Sigmoid colon (tissue), 7 donors: ENCODE measurements at regions of chr11 and their contacts with region 1.

Region 1: DNA sequence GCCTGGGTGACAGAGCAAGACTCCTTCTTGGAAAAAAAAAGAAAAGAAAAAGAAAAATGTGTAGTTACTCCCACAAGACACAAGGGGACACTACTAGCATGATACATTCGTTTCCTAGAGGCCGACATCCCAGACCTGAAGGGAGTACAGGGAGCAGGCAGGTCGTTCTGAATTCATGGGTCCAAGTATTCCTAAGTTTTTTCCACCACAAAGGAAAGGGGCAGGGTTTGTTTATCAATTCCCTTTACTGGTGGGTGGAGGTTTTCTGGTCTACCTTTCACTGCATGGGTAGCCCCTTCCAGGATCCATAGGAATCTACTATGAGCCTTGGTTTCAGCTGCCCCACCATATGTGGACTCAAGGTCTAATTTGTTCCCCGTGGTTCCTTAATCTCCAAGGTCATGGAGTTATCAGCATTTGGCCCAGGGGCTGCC is 11.8 kb downstream of the TIGD3 start:
- DNase-seq: no peak
- H3K4me3 ChIP-seq: no peak overlapping the region
- H3K27ac ChIP-seq: no peak overlapping the region
- H3K4me1 ChIP-seq: peaks cover 0 to 4% (median 4%) of the 10 kb centered on the region in 4 donors
- H3K27me3 ChIP-seq: no peaks in the 10 kb centered on the region
- CTCF ChIP-seq: peak; percentile 65 to 89 (median 72)
- EP300 ChIP-seq: no peak
- POLR2A ChIP-seq: no peak

Region 2: GRCh38 chr11:65606876-65607613 is 240.7 kb after region 1 on chr11:
- intact Hi-C with region 1: loop called (anchors 10 kb)
- DNase-seq: peak; percentile 99
- H3K4me3 ChIP-seq: peak overlapping the region; percentile 11 to 42 (median 34)
- H3K27ac ChIP-seq: peak overlapping the region; percentile 76 to 88 (median 86)
- H3K4me1 ChIP-seq: peaks cover 0 to 48% (median 42%) of the 10 kb centered on the region in 4 donors
- H3K27me3 ChIP-seq: no peaks in the 10 kb centered on the region
- CTCF ChIP-seq: no peak
- EP300 ChIP-seq: peak in 1 of 4 donors; percentile 27
- POLR2A ChIP-seq: no peak